ENCODE measurements at regions of chr2 and their contacts with region 1.

Region 1: DNA sequence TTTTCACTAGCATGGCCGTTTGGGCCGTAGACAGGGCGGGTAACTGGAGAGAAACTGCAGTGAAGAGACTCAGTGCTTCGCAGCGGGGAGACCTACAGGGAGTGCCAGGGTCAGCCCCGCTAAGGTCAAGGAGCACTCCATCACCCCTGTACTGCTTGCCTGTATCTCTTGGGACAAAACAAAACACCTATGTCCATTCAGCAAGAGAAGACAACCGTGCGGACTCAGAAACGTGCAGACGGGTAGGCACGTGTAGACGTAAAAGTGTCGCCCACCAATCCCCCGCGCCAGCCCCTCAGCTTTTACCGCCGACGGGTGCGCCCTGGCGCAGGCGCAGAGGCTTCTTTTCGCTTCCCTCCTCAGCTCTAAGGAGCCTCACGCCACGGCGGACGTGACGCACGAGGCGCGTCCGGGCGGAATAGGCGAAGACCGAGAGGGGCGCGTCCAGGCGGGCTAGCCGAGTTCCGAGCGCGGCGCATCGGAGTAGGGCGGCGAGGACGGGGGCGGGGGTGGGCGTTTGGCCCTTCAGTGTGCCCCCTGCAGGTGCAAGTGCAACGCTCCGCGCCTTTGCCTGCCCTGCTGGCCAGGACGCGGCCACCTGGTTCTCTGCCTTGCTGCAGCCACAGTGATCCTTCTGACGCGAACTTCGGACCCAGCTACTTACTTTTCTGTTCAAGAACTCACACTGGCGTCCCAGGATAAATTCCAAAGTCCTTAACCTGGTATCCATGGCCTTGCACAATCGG is 3.3 kb upstream of the SOS1 start:
- DNase-seq: peak; percentile 94
- H3K4me3 ChIP-seq: peak overlapping the region; percentile 68 to 77
- H3K27ac ChIP-seq: peak overlapping the region; percentile 90 to 92
- H3K4me1 ChIP-seq: peaks cover 5% of the 10 kb centered on the region
- H3K27me3 ChIP-seq: no peaks in the 10 kb centered on the region
- CTCF ChIP-seq: peak in 3 of 4 experiments; percentile 50 to 61 (median 52)
- POLR2A ChIP-seq: peak; percentile 88

Region 2: GRCh38 chr2:38933653-38934052 is 190.5 kb before region 1 on chr2:
- intact Hi-C with region 1: no loop called
- DNase-seq: no peak
- H3K4me3 ChIP-seq: no peak overlapping the region
- H3K27ac ChIP-seq: no peak overlapping the region
- H3K4me1 ChIP-seq: no peaks in the 10 kb centered on the region
- H3K27me3 ChIP-seq: no peaks in the 10 kb centered on the region
- CTCF ChIP-seq: no peak
- POLR2A ChIP-seq: no peak

Region 3: DNA sequence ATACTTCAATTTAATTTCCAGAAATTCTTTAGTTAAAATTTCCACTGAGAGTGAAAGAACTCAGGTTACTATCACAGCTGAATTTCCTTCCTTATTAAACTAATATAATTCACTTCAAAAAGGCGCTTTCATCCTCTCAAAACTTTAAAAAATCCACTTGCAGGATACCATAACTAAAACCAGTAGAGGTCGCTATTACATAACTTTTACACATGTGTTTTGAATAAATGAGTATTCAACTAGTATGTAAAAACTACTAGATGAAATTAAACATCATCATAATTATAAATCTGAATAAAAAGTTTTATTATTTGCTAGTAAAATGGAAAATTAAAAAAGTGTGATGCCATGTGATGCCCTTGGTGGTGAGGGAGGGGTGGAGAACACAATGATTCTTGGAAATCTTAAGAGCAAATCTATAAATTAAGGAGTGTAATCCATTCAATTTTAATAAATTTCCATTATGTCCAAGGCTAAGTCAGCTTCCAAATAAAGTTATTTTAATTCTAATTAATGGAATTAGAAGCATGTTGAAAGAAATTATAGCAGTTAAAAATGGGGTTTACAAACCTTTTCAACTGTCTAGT is 64.7 kb before region 1 on chr2:
- intact Hi-C with region 1: loop called (anchors 2 kb)
- DNase-seq: no peak
- H3K4me3 ChIP-seq: no peak overlapping the region
- H3K27ac ChIP-seq: no peak overlapping the region
- H3K4me1 ChIP-seq: no peaks in the 10 kb centered on the region
- H3K27me3 ChIP-seq: no peaks in the 10 kb centered on the region
- CTCF ChIP-seq: peak; percentile 40 to 74 (median 70)
- POLR2A ChIP-seq: no peak

Region 4: DNA sequence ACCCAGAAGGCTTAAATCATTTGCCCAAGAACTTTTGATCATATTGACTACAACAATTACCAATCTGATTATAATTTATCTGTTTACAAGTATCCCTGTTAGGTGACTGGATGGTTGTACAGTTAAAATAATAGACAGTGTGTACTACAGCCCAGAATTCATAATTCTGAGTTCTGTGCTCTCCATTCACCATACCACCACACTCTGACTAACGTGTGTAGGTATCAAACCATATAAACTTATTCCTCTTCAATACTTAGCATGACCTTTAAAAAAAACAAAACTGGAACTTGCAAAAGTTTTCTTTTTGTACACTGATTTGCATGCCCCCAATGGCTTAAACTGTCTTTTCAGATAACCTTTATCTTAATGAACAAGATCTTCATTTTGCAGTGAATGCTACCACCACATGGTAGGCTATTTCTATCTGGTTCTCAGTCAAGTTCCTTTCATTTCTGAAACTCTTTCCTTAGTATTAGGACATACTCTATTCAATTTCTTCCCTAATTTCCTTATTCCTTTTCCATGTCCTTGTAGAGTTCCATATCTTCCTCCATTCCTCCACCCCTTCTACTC is 54.2 kb before region 1 on chr2:
- intact Hi-C with region 1: loop called (anchors 5 kb)
- DNase-seq: no peak
- H3K4me3 ChIP-seq: no peak overlapping the region
- H3K27ac ChIP-seq: no peak overlapping the region
- H3K4me1 ChIP-seq: no peaks in the 10 kb centered on the region
- H3K27me3 ChIP-seq: no peaks in the 10 kb centered on the region
- CTCF ChIP-seq: no peak
- POLR2A ChIP-seq: no peak

Region 5: DNA sequence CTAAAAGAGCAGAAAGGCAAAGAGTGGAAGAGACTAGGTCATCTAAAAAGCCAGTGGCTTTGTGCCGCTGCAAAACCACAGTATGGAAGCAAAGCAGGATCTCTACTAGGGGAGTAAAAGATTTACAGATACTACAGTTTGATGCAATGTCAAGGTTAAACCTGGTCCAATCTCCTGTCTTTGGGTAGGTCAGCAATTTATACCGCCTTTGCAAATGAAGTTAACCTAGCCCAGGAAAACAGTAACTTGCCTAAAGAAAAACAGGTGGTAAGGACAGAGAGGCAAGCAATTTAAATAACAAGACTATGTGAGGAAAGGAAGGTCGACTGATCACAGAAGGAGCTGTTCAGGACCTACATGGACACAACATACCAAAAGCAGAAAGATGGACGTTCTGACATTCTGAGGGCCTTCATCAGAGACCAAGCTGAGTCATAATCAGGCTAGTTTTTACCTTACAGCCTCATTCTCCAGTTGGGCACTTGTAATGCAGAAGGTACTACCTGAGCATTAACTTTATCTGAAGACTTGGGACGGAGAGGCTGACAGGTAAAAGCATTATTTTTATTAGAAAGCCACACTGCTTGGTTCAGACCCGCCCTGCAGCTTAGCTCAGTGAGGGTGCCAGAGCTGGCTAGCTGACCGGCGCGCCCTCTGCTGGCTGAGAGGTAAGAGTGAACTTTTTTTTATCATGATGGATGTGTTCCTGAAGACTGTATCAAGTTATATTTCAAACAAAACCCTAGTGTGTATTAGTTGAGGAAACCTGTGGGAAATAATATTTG is 103.6 kb after region 1 on chr2:
- intact Hi-C with region 1: loop called (anchors 2 kb)
- DNase-seq: peak; percentile 85
- H3K4me3 ChIP-seq: no peak overlapping the region
- H3K27ac ChIP-seq: no peak overlapping the region
- H3K4me1 ChIP-seq: peaks cover 4% of the 10 kb centered on the region
- H3K27me3 ChIP-seq: no peaks in the 10 kb centered on the region
- CTCF ChIP-seq: peak; percentile 73 to 90 (median 85)
- POLR2A ChIP-seq: no peak

Measured in prostate gland (tissue), 2 donors.